ENCODE measurements at regions of chr10 and their contacts with region 1.

Region 1: GRCh38 chr10:84352251-84352842 is 24.0 kb downstream of the CCSER2 start:
- DNase-seq: peak; percentile 52 to 83 (median 59)
- H3K4me3 ChIP-seq: no peak overlapping the region
- H3K4me3 Mint-ChIP-seq: peak overlapping the region in 3 of 7 donors; percentile 7 to 37 (median 14)
- H3K27ac ChIP-seq: no peak overlapping the region
- H3K27ac Mint-ChIP-seq: peak overlapping the region in 6 of 8 donors; percentile 22 to 75 (median 46)
- H3K4me1 ChIP-seq: peaks cover 53% of the 10 kb centered on the region
- H3K4me1 Mint-ChIP-seq: peaks cover 63 to 87% (median 84%) of the 10 kb centered on the region in 3 donors
- H3K27me3 ChIP-seq: no peaks in the 10 kb centered on the region
- H3K27me3 Mint-ChIP-seq: no peaks in the 10 kb centered on the region

Region 2: GRCh38 chr10:84328418-84329195 is 23.7 kb before region 1 on chr10 and contains the start of gene CCSER2:
- CTCF ChIA-PET with region 1: interaction called, 28 read pairs
- POLR2A ChIA-PET with region 1: interaction called, 3 read pairs
- DNase-seq: peak; percentile 90 to 93 (median 93)
- H3K4me3 ChIP-seq: peak within 1 kb of the TSS; percentile 90
- H3K4me3 Mint-ChIP-seq: peak within 1 kb of the TSS; percentile 94 to 97 (median 97)
- H3K27ac ChIP-seq: peak within 1 kb of the TSS; percentile 87
- H3K27ac Mint-ChIP-seq: peak within 1 kb of the TSS; percentile 99 to 100 (median 99)
- H3K4me1 ChIP-seq: peaks cover 25% of the 10 kb centered on the region
- H3K4me1 Mint-ChIP-seq: peaks cover 35 to 38% (median 36%) of the 10 kb centered on the region in 3 donors
- H3K27me3 ChIP-seq: no peaks in the 10 kb centered on the region
- H3K27me3 Mint-ChIP-seq: no peaks in the 10 kb centered on the region
- total RNA-seq, gene CCSER2: 62.6 to 74.5 TPM

Region 3: GRCh38 chr10:84333864-84334451 is 18.4 kb before region 1 on chr10:
- CTCF ChIA-PET with region 1: interaction called, 28 read pairs
- POLR2A ChIA-PET with region 1: interaction called, 3 read pairs
- DNase-seq: peak; percentile 56 to 93 (median 86)
- H3K4me3 ChIP-seq: peak overlapping the region; percentile 12
- H3K4me3 Mint-ChIP-seq: peak overlapping the region; percentile 31 to 81 (median 63)
- H3K27ac ChIP-seq: peak overlapping the region; percentile 55
- H3K27ac Mint-ChIP-seq: peak overlapping the region in 2 of 8 donors; percentile 83 to 95
- H3K4me1 ChIP-seq: peaks cover 72% of the 10 kb centered on the region
- H3K4me1 Mint-ChIP-seq: peaks cover 32 to 55% (median 40%) of the 10 kb centered on the region in 3 donors
- H3K27me3 ChIP-seq: no peaks in the 10 kb centered on the region
- H3K27me3 Mint-ChIP-seq: no peaks in the 10 kb centered on the region

Region 4: GRCh38 chr10:84341538-84341856 is 10.8 kb before region 1 on chr10:
- CTCF ChIA-PET with region 1: interaction called, 28 read pairs
- POLR2A ChIA-PET with region 1: interaction called, 5 read pairs
- DNase-seq: no peak
- H3K4me3 ChIP-seq: no peak overlapping the region
- H3K4me3 Mint-ChIP-seq: peak overlapping the region in 4 of 7 donors; percentile 36 to 52 (median 44)
- H3K27ac ChIP-seq: no peak overlapping the region
- H3K27ac Mint-ChIP-seq: peak overlapping the region in 7 of 8 donors; percentile 28 to 79 (median 70)
- H3K4me1 ChIP-seq: peaks cover 68% of the 10 kb centered on the region
- H3K4me1 Mint-ChIP-seq: peaks cover 57 to 72% (median 61%) of the 10 kb centered on the region in 3 donors
- H3K27me3 ChIP-seq: no peaks in the 10 kb centered on the region
- H3K27me3 Mint-ChIP-seq: no peaks in the 10 kb centered on the region

Region 5: DNA sequence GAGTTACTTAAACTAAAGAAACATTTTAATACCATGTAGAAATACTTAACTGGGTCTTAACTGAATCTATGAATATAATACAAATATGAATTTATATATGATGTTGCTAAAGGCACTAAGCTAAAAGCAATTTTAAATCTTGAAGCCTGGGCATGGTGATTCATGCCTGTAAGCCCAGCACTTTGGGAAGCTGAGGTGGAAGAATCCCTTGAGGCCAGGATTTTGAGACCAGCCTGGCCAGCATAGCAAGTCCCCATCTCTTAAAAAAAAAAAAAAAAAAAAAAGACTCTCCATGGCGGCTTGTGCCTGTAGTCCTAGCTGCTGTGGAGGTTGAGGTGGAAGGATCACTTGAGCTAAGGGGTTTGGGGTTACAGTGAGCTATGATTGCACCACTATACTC is 71.4 kb after region 1 on chr10:
- CTCF ChIA-PET with region 1: no interaction called
- POLR2A ChIA-PET with region 1: no interaction called
- DNase-seq: no peak
- H3K4me3 ChIP-seq: no peak overlapping the region
- H3K4me3 Mint-ChIP-seq: no peak overlapping the region
- H3K27ac ChIP-seq: no peak overlapping the region
- H3K27ac Mint-ChIP-seq: peak overlapping the region in 3 of 8 donors; percentile 75 to 94 (median 91)
- H3K4me1 ChIP-seq: peaks cover 29% of the 10 kb centered on the region
- H3K4me1 Mint-ChIP-seq: peaks cover 50 to 75% (median 74%) of the 10 kb centered on the region in 3 donors
- H3K27me3 ChIP-seq: no peaks in the 10 kb centered on the region
- H3K27me3 Mint-ChIP-seq: no peaks in the 10 kb centered on the region